ENCODE measurements at regions of chr6 and their contacts with region 1.

Region 1: DNA sequence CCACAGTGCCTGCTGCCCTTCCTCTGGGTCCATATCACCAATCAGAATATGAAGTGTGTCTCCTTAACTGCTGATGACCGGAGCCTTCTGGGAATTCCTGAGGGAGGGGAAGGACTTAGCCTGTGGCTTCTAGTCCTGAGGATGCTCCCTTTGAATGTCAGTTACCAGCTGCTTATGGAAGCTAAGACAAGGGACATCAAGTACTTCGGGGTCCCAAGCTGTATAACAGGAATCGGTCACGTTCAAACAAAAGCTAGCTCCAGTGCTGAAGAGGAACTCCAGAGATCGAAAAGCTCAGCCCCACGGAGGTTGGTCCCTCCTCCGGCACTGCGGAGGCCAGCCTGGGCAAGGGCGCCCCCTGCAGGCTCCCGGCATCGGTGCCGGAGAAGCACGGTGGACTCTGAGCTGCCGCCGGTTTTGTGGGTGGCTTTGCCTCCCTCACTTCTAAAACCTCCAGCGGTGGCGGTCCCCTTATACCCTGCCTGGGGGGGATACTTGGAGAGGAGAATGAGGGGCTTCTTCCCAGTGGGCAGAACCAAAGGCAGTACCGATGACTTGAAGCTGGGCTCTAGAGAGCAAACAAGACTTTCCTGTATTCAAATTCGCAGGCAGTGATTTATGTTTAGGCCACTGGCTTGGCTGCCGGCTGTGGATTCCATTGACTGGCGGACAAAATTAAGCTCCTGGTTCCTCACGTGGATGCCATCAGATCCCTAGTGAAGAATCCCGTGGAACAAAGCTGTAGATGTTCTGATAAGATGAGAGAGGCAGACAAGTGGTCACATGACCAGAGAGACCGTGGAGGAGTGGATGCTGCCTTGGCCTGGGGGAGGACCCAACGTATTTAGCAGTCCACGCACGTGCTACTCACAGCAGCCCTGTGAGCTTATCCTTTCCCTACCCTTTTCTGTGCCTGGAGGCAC is 16.2 kb upstream of the UBR2 start:
- DNase-seq: peak; percentile 45
- H3K4me3 ChIP-seq: peak overlapping the region; percentile 53
- H3K27ac ChIP-seq: no peak overlapping the region
- H3K27me3 ChIP-seq: no peaks in the 10 kb centered on the region
- CTCF ChIP-seq: peak; percentile 100

Region 2: GRCh38 chr6:42224222-42224989 is 323.3 kb before region 1 on chr6:
- CTCF ChIA-PET with region 1: interaction called, 45 read pairs
- POLR2A ChIA-PET with region 1: no interaction called
- DNase-seq: no peak
- H3K4me3 ChIP-seq: no peak overlapping the region; the same call in 1 of the 2 replicates
- H3K27ac ChIP-seq: peak overlapping the region; percentile 49
- H3K27me3 ChIP-seq: no peaks in the 10 kb centered on the region
- CTCF ChIP-seq: no peak

Region 3: GRCh38 chr6:42279144-42279781 is 268.4 kb before region 1 on chr6:
- CTCF ChIA-PET with region 1: interaction called, 23 read pairs
- POLR2A ChIA-PET with region 1: no interaction called
- DNase-seq: no peak
- H3K4me3 ChIP-seq: no peak overlapping the region
- H3K27ac ChIP-seq: no peak overlapping the region
- H3K27me3 ChIP-seq: no peaks in the 10 kb centered on the region
- CTCF ChIP-seq: no peak

Region 4: GRCh38 chr6:42352856-42353564 is 194.7 kb before region 1 on chr6:
- CTCF ChIA-PET with region 1: interaction called, 13 read pairs
- POLR2A ChIA-PET with region 1: no interaction called
- DNase-seq: peak; percentile 34
- H3K4me3 ChIP-seq: no peak overlapping the region
- H3K27ac ChIP-seq: no peak overlapping the region
- H3K27me3 ChIP-seq: no peaks in the 10 kb centered on the region
- CTCF ChIP-seq: no peak

Region 5: DNA sequence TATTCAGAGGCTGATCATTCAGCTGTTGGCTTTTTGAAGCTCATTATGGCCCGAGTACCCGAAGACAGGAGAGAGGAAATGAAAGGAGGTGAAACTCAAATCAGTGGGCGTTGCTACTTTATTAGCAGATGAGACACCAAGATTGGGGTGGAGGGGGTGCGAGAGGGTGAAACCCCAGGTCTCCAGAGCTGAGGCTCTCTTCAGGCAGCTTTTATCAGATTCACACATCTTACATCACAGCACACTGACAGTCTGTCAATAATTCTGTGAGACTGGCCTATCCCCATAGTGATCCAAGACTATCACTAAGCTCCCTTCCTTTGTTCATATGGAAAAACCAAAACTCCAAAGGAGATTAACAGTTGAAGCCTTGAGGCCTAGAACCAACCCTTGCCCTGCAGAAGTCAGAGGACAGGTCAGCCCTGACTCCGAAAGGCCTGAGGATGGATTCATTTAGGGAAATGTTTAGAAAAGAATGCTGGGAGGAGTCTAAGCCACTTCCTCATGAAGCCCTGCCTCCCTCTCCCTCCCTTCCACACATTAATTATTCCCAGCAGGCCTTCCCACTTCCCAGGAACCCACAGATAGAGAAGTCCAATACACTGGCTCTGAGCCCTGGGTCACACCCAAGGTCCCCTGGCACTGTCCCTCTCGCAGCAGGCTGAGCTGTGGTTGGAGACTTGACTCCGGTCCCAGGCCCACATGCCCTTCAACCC is 119.2 kb before region 1 on chr6:
- CTCF ChIA-PET with region 1: interaction called, 15 read pairs
- POLR2A ChIA-PET with region 1: no interaction called
- DNase-seq: no peak
- H3K4me3 ChIP-seq: no peak overlapping the region
- H3K27ac ChIP-seq: no peak overlapping the region
- H3K27me3 ChIP-seq: no peaks in the 10 kb centered on the region
- CTCF ChIP-seq: no peak

Region 6: DNA sequence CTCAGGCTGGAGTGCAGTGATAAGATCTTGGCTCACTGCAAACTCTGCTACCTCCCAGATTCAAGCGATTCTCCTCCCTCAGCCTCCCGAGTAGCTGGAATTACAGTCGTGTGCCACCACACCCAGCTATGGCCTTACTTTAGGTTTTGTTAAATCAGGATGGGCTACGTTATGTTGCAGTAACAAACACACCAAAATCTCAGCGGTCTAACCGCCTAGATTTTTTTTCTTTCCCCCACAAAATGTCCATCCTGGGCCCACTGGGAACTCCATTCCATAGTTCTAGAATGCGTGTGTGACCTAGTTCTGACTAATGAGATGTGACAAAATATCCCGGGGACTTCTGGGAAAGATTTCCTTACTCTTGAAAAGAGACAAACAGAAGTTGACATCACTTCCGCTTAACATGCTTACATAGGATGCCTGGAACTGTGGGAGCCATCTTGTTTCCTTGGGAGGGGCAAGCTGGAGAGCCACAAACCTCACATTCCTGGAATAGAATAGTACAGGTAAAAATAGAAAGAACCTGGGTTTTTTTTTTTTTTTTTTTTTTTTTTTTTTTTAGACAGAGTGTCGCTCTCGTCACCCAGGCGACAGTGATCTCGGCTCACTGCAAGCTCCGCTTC is 53.6 kb before region 1 on chr6:
- CTCF ChIA-PET with region 1: interaction called, 27 read pairs
- POLR2A ChIA-PET with region 1: no interaction called
- DNase-seq: no peak
- H3K4me3 ChIP-seq: no peak overlapping the region
- H3K27ac ChIP-seq: no peak overlapping the region
- H3K27me3 ChIP-seq: no peaks in the 10 kb centered on the region
- CTCF ChIP-seq: no peak

Region 7: GRCh38 chr6:42563697-42564505 is 16.2 kb after region 1 on chr6 and contains the start of gene UBR2:
- CTCF ChIA-PET with region 1: interaction called, 81 read pairs
- POLR2A ChIA-PET with region 1: interaction called, 6 read pairs
- DNase-seq: peak; percentile 95
- H3K4me3 ChIP-seq: peak within 1 kb of the TSS; percentile 96
- H3K27ac ChIP-seq: peak within 1 kb of the TSS; percentile 93
- H3K27me3 ChIP-seq: peaks cover 3% of the 10 kb centered on the region
- CTCF ChIP-seq: no peak; the same call in none of the 2 replicates
- polyA plus RNA-seq, gene UBR2: 18.5 and 25.3 TPM in 2 replicates

Region 8: DNA sequence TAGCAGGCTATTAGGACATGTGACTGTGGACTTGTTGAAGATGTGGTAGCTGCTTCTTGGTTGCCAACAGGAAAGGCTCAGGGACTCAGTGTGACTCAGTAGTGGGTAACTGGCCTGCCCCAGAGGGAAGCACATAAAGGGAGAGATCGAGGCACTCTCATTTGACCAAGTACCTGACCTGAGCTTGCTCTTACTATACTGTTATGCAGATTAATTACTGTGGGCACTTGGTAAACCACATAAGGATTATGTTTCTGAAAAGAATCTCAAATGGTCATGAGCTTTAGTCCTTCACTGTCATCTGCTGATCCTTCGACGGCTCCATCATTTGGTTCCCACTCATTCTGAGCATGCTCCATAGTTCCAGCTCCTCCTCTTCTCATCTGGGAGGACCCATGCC is 283.6 kb after region 1 on chr6:
- CTCF ChIA-PET with region 1: no interaction called
- POLR2A ChIA-PET with region 1: no interaction called
- DNase-seq: no peak
- H3K4me3 ChIP-seq: no peak overlapping the region
- H3K27ac ChIP-seq: no peak overlapping the region
- H3K27me3 ChIP-seq: no peaks in the 10 kb centered on the region
- CTCF ChIP-seq: no peak

Region 9: GRCh38 chr6:43386492-43386891 is 838.8 kb after region 1 on chr6:
- CTCF ChIA-PET with region 1: no interaction called
- POLR2A ChIA-PET with region 1: no interaction called
- DNase-seq: no peak
- H3K4me3 ChIP-seq: no peak overlapping the region
- H3K27ac ChIP-seq: no peak overlapping the region
- H3K27me3 ChIP-seq: peaks cover 17% of the 10 kb centered on the region
- CTCF ChIP-seq: peak; percentile 46